GM18951 (cell line): ENCODE measurements at regions of chr15 and their contacts with region 1.

Region 1: DNA sequence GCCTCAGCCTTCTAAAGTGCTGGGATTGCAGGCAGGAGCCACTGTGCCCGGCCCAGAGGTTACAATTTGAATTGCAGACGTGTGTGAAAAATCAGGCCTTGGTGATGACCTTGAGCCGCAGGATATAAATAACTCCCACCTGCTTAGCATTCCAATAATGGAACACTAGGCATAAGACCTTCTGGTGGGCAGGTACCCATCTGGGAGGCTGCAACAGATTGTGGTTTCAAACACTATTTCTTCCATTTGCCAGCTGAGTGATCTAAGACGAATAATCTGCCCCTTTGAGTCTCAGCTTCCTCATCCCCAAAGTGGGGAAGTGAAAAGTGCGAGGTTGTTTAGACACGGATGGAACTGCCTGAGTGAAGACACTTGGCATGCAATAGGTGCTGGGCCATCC is 47.7 kb upstream of the HERC1 start:
- POLR2A ChIP-seq: no peak

Region 2: GRCh38 chr15:63752075-63752684 is 129.3 kb before region 1 on chr15:
- in situ Hi-C with region 1: loop called (anchors 10 kb)
- POLR2A ChIP-seq: no peak

Region 3: GRCh38 chr15:63783441-63783840 is 98.0 kb before region 1 on chr15:
- in situ Hi-C with region 1: no loop called
- POLR2A ChIP-seq: no peak

Region 4: GRCh38 chr15:64197425-64197824 is 316.0 kb after region 1 on chr15:
- in situ Hi-C with region 1: no loop called
- POLR2A ChIP-seq: no peak

Region 5: GRCh38 chr15:64343222-64343621 is 461.8 kb after region 1 on chr15:
- in situ Hi-C with region 1: no loop called
- POLR2A ChIP-seq: no peak